Ascending aorta (tissue), 2 donors: ENCODE measurements at regions of chr1 and their contacts with region 1.

Region 1: DNA sequence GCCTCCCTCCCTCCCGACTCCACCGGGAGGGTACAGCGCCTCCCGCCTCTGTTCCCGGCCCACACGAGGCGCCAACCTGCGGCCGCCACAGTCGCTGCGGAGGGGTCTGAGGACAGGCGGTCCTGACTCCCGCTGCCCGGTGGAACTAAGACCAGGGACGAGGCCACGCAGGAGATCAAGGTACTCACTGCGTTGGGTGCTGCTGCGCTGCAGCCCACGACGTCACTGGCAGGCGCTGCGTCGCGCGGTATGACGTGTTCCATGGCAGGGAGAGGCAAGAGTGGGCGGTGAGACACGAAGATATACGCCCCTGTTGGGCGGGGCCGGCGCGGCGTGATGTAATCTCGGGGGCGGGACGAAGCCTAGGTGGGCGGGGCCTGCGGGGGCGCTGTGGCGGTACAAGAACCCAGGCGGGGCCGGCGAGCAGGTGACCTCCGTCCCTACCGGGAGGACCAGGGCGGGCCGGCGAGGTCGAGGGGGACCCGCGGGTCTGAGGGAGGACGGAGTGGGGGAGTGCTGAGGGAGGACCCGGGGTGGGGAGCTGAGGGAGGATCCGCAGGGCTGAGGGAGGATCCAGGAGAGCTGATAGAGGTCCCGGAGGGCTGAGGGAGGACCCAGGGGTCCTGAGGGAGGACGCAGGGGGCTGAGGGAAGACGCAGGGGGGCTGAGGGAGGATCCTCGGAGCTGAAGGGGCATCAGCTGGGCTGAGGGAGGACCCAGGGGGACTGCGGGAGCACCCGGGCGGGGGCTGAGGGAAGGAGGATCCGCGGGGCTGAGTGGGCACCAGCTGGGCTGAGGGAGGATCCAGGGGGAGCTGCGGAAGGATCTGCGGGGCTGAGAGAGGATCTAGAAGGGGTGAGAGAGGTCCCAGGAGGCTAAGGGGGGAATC is at the start of gene MRPL55:
- DNase-seq: peak; percentile 94 to 99
- H3K4me3 ChIP-seq: peak within 1 kb of the TSS; percentile 77 to 97
- H3K27ac ChIP-seq: peak within 1 kb of the TSS; percentile 88 to 89
- H3K4me1 ChIP-seq: peaks cover 14 to 18% of the 10 kb centered on the region in 2 donors
- H3K27me3 ChIP-seq: no peaks in the 10 kb centered on the region
- CTCF ChIP-seq: peak in 1 of 3 experiments; percentile 9
- total RNA-seq, gene MRPL55: 23.6 TPM

Region 2: DNA sequence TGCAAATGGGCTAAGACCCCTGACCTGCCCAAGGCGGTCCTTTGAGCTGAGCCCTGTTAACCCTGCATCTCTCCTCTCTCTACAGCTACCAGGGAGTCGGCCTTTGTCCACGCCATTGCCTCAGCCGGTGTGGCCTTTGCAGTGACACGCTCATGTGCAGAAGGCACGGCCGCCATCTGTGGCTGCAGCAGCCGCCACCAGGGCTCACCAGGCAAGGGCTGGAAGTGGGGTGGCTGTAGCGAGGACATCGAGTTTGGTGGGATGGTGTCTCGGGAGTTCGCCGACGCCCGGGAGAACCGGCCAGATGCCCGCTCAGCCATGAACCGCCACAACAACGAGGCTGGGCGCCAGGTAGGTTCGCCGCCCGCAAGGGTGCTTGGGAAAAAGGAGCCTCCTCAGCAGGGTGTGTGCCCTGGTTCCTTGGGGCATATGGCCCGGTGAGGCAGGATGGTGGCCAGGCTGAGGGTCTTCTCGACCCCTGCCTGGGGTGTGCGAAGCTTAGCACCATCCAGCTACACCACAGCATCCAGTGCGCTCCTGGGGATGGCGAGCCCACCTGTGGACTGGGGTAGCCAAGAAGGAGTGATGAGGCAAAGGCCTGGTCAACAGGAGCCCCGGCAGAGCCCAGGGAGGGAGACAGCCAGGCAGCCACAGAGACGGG is 58.6 kb before region 1 on chr1:
- intact Hi-C with region 1: no loop called
- DNase-seq: no peak
- H3K4me3 ChIP-seq: no peak overlapping the region
- H3K27ac ChIP-seq: no peak overlapping the region
- H3K4me1 ChIP-seq: no peaks in the 10 kb centered on the region
- H3K27me3 ChIP-seq: no peaks in the 10 kb centered on the region
- CTCF ChIP-seq: no peak

Region 3: DNA sequence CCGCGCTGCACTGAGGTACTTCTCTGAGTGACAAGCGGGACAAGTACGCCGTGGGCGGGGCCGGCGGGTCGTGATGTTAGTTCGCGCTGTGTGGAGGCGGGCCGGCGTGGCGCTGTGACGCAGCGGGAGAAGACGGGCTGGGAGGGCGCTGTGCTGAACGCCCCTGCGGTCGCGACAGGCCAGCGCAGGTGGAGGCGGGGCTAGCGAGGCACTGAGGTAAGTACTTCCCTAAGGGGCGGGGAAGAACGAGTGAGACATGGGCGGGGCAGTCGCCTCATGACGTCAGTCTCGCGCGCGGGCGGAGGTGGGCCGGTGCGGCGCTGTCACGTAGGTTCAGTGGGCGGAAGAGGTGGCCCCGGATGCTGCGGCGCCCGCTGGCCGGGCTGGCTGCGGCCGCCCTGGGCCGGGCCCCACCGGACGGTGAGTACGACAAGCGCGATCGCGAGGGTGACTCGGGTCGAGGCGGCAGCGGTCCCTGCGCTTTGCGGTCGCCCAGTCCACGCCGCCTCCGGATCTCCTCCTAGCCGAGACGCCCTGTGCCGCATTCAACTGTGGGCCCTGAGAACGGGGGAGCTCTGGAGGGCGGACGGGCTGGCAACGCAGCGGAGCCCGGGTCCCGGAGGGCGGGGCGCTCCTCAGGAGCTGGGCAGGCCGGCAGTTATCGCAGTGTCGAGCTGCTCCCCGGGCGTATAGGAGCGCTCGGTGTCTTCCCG is 30.8 kb after region 1 on chr1 and contains the start of gene GUK1:
- intact Hi-C with region 1: loop called (anchors 1 kb)
- DNase-seq: peak; percentile 100
- H3K4me3 ChIP-seq: peak within 1 kb of the TSS; percentile 79 to 92
- H3K27ac ChIP-seq: peak within 1 kb of the TSS; percentile 90 to 96
- H3K4me1 ChIP-seq: peaks cover 18 to 34% of the 10 kb centered on the region in 2 donors
- H3K27me3 ChIP-seq: no peaks in the 10 kb centered on the region
- CTCF ChIP-seq: peak in 1 of 3 experiments; percentile 17
- total RNA-seq, gene GUK1: 979 TPM

Region 4: GRCh38 chr1:228150461-228151179 is 41.3 kb after region 1 on chr1:
- intact Hi-C with region 1: no loop called
- DNase-seq: no peak
- H3K4me3 ChIP-seq: peak overlapping the region in 1 of 2 donors; percentile 34
- H3K27ac ChIP-seq: peak overlapping the region; percentile 81 to 93
- H3K4me1 ChIP-seq: peaks cover 8 to 30% of the 10 kb centered on the region in 2 donors
- H3K27me3 ChIP-seq: no peaks in the 10 kb centered on the region
- CTCF ChIP-seq: no peak

Region 5: DNA sequence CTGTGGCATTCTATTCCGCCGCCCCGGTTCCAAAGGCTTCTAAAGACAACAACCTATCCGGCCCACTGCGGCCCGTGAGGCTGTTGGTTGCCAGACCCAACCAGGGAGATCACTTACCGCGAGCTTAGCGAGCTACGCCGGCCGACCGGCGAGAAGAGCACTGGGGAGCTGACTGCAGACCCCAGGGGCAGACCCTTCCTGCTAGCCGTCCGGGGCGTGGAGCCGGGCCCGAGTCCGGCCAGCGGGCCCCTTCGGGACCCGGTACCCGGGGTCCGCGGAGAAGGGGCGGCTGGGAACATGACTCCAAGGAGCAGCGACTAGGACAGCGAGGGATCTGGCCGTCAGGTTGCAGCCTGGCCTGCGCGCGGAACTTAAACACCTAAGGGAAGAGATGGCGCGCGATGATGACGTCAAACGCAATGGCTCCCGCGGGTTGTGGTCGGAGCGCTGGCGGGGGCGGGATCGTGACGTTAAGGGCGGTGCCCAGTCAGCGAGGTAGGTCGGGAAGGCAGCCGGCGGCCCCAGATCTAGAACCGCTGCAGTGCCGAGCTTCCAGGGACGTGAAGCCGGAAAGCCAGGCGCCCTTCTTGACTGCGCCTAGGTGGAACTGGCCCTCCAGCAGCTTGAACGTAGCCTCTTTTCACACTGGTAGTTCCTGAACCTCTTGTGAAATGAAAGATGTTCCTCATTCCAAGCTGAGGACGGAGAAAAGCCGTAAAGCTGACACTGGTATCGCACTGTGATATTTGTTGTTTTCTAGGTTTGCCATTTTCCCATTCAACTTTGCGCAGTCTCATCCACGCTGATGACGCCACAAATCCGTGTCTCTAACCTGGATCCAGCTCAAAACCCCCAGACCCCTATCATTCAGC is 1398.9 kb after region 1 on chr1 and contains the start of gene NUP133:
- intact Hi-C with region 1: loop called (anchors 10 kb)
- DNase-seq: peak; percentile 92 to 99
- H3K4me3 ChIP-seq: peak within 1 kb of the TSS; percentile 96 to 100
- H3K27ac ChIP-seq: peak within 1 kb of the TSS; percentile 89 to 98
- H3K4me1 ChIP-seq: peaks cover 7 to 11% of the 10 kb centered on the region in 2 donors
- H3K27me3 ChIP-seq: no peaks in the 10 kb centered on the region
- CTCF ChIP-seq: no peak
- total RNA-seq, gene NUP133: 9.3 TPM